Activated CD4-positive, alpha-beta memory T cell treated with anti-CD3 and anti-CD28 coated beads, Interleukin-2, amount 10 ng/mL, durations not matched to agents 7 days and 5 days (primary cell): ENCODE measurements at regions of chr6 and their contacts with region 1.

Region 1: DNA sequence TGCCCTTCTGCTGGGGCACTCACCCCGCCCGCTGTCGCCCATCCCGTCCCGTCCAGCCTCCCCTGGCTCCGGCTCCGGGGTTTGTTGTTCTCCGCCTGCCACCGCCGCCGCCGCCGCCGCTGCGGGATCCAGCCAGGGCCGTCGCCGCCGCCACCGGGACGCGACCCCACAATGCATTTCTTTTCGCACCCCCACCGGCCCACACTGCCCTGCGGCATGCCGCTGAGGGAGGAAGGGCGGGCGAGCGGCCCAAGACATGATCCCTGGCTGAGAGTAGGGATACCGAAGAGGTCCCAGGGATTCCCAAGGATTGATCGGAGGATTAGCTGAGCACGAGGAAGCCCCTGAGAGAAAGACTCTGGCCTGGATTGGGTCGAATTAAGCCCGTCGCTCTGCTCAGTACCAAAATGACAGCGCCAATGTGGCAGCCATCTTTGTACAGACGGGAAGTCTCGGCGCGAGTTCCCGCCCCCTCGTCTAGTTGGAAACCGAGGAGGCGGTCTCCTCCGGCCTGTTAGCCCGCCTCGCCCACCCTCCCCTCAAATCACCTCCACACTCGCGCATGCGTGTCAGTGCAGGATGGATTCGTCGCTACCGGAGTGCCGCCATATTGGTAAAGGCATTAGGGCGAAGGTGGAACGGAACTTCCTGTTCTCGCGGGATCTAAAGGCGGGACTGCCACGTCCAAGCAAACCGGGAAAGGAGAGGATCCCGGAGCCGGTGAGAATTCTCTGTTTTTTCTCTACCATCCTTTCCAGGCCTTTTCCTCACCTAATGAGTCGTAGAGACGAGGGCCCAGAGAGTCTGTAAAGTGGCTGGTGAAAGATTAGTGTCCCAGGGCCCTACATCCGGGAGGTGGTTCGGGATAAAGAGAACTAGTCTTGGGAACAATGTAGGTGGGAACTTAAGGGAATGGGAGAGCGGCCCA is at the starts of genes RXRB and SLC39A7:
- DNase-seq: peak; percentile 100
- H3K4me3 Mint-ChIP-seq: peak within 1 kb of the TSS; percentile 99
- H3K27ac Mint-ChIP-seq: peak within 1 kb of the TSS; percentile 95
- H3K4me1 Mint-ChIP-seq: peaks cover 71% of the 10 kb centered on the region
- H3K27me3 Mint-ChIP-seq: no peaks in the 10 kb centered on the region
- total RNA-seq, gene RXRB: 44.0 to 45.0 TPM
- total RNA-seq, gene SLC39A7: 52.8 to 53.8 TPM

Region 2: GRCh38 chr6:32796848-32797776 is 403.4 kb before region 1 on chr6:
- CTCF ChIA-PET with region 1: no interaction called
- POLR2A ChIA-PET with region 1: no interaction called
- DNase-seq: peak; percentile 78
- H3K4me3 Mint-ChIP-seq: peak overlapping the region; percentile 33
- H3K27ac Mint-ChIP-seq: no peak overlapping the region
- H3K4me1 Mint-ChIP-seq: peaks cover 25% of the 10 kb centered on the region
- H3K27me3 Mint-ChIP-seq: peaks cover 77% of the 10 kb centered on the region

Region 3: DNA sequence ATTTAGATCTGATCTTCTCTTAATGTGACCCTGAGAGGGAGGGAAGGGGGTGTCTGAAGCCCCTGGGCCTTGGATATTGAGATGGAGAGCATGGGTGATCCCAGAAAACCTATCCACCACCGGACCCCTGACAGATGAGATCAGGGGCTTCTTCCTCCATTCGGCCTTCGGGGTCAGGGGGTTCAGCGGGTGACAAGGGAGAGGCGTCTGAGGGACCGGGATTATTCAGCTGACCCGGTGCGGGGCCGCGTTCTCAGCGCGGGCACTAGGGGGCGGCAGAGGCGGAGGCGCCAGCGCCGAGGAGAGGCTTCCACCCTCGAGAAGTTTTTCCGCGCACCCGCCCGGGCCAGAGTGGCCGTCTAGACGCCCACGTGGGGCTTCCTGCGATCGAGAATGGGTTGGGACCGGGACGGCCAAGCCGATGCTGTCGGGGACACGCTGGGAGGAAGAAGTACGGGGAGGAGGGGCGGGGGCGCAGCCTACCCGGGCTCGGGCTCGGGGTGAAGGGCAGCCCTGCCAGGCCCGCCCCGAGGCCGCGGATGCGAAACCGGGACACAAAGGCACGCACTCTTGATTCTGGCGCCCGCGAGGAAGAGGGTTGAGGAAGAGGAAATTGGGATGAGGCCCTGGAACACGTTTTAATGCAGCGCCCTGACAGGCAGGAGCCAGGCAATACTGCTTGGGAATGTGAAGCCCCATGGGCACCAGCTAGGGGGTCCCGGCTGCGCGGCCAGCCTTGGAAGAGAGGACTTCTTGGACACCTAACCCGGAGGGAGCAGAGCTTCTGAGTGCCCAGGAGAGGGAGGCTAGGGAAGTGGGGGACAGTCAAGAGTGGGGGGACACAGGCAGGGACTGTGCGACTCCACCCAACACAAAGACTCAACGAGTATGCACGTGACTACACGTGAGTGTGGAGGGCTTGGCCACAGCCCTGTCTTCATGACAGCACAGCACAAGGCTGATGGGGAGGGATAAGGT is 38.8 kb before region 1 on chr6:
- CTCF ChIA-PET with region 1: interaction called, 10 read pairs
- POLR2A ChIA-PET with region 1: interaction called, 3 read pairs
- DNase-seq: peak; percentile 86
- H3K4me3 Mint-ChIP-seq: peak overlapping the region; percentile 79
- H3K27ac Mint-ChIP-seq: peak overlapping the region; percentile 69
- H3K4me1 Mint-ChIP-seq: peaks cover 17% of the 10 kb centered on the region
- H3K27me3 Mint-ChIP-seq: peaks cover 8% of the 10 kb centered on the region

Region 4: GRCh38 chr6:33183071-33183683 is 17.3 kb before region 1 on chr6:
- CTCF ChIA-PET with region 1: interaction called, 12 read pairs
- POLR2A ChIA-PET with region 1: interaction called, 6 read pairs
- DNase-seq: no peak
- H3K4me3 Mint-ChIP-seq: no peak overlapping the region
- H3K27ac Mint-ChIP-seq: peak overlapping the region; percentile 90
- H3K4me1 Mint-ChIP-seq: peaks cover 23% of the 10 kb centered on the region
- H3K27me3 Mint-ChIP-seq: peaks cover 17% of the 10 kb centered on the region